CD8-positive, alpha-beta memory T cell (primary cell): ENCODE measurements at regions of chr15 and their contacts with region 1.

Region 1: DNA sequence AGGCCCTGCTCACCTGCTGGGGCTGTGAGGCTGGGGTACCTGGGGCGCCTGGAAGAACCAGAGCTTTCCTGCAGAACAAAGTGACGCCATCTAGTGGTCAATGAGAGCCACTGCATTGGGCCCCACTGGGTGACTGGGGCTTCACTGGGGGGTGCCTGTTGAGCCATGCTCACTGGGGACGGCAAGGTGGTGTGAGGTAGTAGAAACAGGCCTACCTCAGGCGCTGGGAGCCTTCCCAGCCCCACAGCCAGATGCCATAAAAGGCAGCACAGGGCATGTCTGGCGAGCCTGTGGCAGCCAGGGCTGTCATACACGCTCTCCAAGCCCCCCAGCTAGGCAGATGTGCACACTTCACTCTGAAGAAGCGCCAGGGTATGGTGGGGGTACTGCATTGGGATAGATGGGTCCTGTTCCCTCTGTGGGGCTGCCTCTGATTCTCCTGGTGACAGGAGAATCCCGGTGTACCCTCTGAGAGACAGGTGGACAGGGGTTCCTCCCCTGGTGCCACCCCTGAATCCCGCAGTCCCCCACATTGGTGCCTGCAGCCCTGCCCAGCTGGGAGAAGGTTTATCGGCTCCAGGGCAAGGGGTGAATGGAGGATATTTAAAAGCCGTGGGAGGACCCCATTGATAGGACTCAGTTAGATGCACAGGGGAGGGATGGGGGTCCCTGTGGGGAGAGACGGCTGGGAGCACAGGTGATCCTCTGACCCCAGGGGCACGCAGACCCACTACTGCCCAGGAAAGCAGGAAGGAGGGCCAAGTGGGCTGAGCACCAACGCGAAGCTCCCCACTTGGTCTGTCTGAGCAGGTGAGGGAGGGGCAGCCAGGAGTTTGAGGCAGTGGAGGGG is 178.8 kb downstream of the NSMCE3 start:
- DNase-seq: peak; percentile 28 to 71 (median 34)
- H3K4me3 ChIP-seq: no peak overlapping the region
- H3K4me3 Mint-ChIP-seq: peak overlapping the region in 6 of 7 donors; percentile 12 to 93 (median 76)
- H3K27ac ChIP-seq: no peak overlapping the region
- H3K27ac Mint-ChIP-seq: peak overlapping the region in 5 of 8 donors; percentile 22 to 85 (median 75)
- H3K4me1 ChIP-seq: peaks cover 18% of the 10 kb centered on the region
- H3K4me1 Mint-ChIP-seq: peaks cover 27 to 41% (median 34%) of the 10 kb centered on the region in 3 donors
- H3K27me3 ChIP-seq: no peaks in the 10 kb centered on the region
- H3K27me3 Mint-ChIP-seq: no peaks in the 10 kb centered on the region

Region 2: DNA sequence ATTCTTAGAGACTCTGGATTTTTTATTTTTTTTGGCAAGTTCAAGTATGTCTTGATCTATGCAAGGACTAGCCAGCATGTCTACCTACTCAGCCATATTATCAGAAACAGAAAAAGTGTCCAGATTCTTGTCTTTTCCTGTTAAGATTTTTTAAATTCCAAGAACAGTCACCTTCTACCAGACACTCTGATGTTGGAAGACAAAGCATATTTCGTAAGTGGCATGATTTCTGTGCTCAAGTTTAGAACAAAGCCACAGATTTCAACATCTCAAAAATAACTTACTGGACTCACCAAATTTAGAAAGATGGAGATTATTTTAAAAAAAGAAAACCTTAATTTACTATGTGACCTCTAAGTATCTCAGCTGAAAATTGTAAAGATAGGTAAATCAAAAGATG is 304.3 kb before region 1 on chr15:
- CTCF ChIA-PET with region 1: interaction called, 14 read pairs
- POLR2A ChIA-PET with region 1: no interaction called
- DNase-seq: no peak
- H3K4me3 ChIP-seq: no peak overlapping the region
- H3K4me3 Mint-ChIP-seq: no peak overlapping the region
- H3K27ac ChIP-seq: no peak overlapping the region
- H3K27ac Mint-ChIP-seq: peak overlapping the region in 1 of 8 donors; percentile 37
- H3K4me1 ChIP-seq: no peaks in the 10 kb centered on the region
- H3K4me1 Mint-ChIP-seq: peaks cover 0 to 11% (median 4%) of the 10 kb centered on the region in 3 donors
- H3K27me3 ChIP-seq: no peaks in the 10 kb centered on the region
- H3K27me3 Mint-ChIP-seq: peaks cover 10 to 19% of the 10 kb centered on the region in 2 donors

Region 3: GRCh38 chr15:28885630-28886430 is 205.0 kb before region 1 on chr15 and contains the start of gene APBA2:
- CTCF ChIA-PET with region 1: interaction called, 10 read pairs
- POLR2A ChIA-PET with region 1: interaction called, 3 read pairs
- DNase-seq: peak; percentile 2 to 72 (median 48)
- H3K4me3 ChIP-seq: peak within 1 kb of the TSS; percentile 60
- H3K4me3 Mint-ChIP-seq: peak within 1 kb of the TSS; percentile 76 to 91 (median 88)
- H3K27ac ChIP-seq: peak within 1 kb of the TSS; percentile 27
- H3K27ac Mint-ChIP-seq: peak within 1 kb of the TSS in 4 of 8 donors; percentile 5 to 91 (median 84)
- H3K4me1 ChIP-seq: peaks cover 49% of the 10 kb centered on the region
- H3K4me1 Mint-ChIP-seq: peaks cover 30 to 47% (median 32%) of the 10 kb centered on the region in 3 donors
- H3K27me3 ChIP-seq: no peaks in the 10 kb centered on the region
- H3K27me3 Mint-ChIP-seq: peaks cover 0 to 3% of the 10 kb centered on the region in 2 donors
- total RNA-seq, gene APBA2: 15.7 to 18.0 TPM

Region 4: GRCh38 chr15:28942046-28942445 is 148.8 kb before region 1 on chr15:
- CTCF ChIA-PET with region 1: interaction called, 12 read pairs
- POLR2A ChIA-PET with region 1: no interaction called
- DNase-seq: peak in 4 of 5 donors; percentile 30 to 70 (median 56)
- H3K4me3 ChIP-seq: peak overlapping the region; percentile 35
- H3K4me3 Mint-ChIP-seq: peak overlapping the region in 6 of 7 donors; percentile 35 to 83 (median 57)
- H3K27ac ChIP-seq: no peak overlapping the region
- H3K27ac Mint-ChIP-seq: peak overlapping the region; percentile 19 to 88 (median 66)
- H3K4me1 ChIP-seq: peaks cover 77% of the 10 kb centered on the region
- H3K4me1 Mint-ChIP-seq: peaks cover 65 to 91% (median 78%) of the 10 kb centered on the region in 3 donors
- H3K27me3 ChIP-seq: no peaks in the 10 kb centered on the region
- H3K27me3 Mint-ChIP-seq: no peaks in the 10 kb centered on the region

Region 5: DNA sequence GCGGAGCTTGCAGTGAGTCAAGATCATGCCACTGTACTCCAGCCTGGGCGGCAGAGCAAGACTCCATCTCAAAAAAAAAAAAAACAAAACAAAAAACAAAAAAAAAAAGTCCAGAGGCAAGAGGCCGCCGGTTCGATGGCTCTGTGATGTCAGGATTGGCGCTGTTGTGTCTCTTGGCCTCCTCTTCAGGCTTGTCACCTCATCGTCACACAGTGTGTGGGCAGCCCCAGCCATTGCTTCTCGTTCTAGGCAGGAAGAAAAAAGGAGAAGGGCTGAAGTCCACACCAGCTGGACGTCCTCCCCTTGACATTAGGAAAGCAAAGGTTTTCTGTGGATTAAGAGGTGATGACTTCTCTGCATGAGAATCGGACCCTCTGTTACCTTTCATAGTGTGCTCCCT is 12.3 kb before region 1 on chr15:
- CTCF ChIA-PET with region 1: interaction called, 22 read pairs
- POLR2A ChIA-PET with region 1: no interaction called
- DNase-seq: no peak
- H3K4me3 ChIP-seq: no peak overlapping the region
- H3K4me3 Mint-ChIP-seq: no peak overlapping the region
- H3K27ac ChIP-seq: no peak overlapping the region
- H3K27ac Mint-ChIP-seq: peak overlapping the region in 2 of 8 donors; percentile 12 to 58
- H3K4me1 ChIP-seq: no peaks in the 10 kb centered on the region
- H3K4me1 Mint-ChIP-seq: peaks cover 0 to 3% (median 0%) of the 10 kb centered on the region in 3 donors
- H3K27me3 ChIP-seq: no peaks in the 10 kb centered on the region
- H3K27me3 Mint-ChIP-seq: no peaks in the 10 kb centered on the region

Region 6: GRCh38 chr15:29196290-29196689 is 105.4 kb after region 1 on chr15:
- CTCF ChIA-PET with region 1: no interaction called
- POLR2A ChIA-PET with region 1: no interaction called
- DNase-seq: no peak
- H3K4me3 ChIP-seq: no peak overlapping the region
- H3K4me3 Mint-ChIP-seq: no peak overlapping the region
- H3K27ac ChIP-seq: no peak overlapping the region
- H3K27ac Mint-ChIP-seq: no peak overlapping the region
- H3K4me1 ChIP-seq: no peaks in the 10 kb centered on the region
- H3K4me1 Mint-ChIP-seq: no peaks in the 10 kb centered on the region
- H3K27me3 ChIP-seq: no peaks in the 10 kb centered on the region
- H3K27me3 Mint-ChIP-seq: peaks cover 6 to 27% of the 10 kb centered on the region in 2 donors